AG04450 (cell line): ENCODE measurements at regions of chr3 and their contacts with region 1.

Region 1: DNA sequence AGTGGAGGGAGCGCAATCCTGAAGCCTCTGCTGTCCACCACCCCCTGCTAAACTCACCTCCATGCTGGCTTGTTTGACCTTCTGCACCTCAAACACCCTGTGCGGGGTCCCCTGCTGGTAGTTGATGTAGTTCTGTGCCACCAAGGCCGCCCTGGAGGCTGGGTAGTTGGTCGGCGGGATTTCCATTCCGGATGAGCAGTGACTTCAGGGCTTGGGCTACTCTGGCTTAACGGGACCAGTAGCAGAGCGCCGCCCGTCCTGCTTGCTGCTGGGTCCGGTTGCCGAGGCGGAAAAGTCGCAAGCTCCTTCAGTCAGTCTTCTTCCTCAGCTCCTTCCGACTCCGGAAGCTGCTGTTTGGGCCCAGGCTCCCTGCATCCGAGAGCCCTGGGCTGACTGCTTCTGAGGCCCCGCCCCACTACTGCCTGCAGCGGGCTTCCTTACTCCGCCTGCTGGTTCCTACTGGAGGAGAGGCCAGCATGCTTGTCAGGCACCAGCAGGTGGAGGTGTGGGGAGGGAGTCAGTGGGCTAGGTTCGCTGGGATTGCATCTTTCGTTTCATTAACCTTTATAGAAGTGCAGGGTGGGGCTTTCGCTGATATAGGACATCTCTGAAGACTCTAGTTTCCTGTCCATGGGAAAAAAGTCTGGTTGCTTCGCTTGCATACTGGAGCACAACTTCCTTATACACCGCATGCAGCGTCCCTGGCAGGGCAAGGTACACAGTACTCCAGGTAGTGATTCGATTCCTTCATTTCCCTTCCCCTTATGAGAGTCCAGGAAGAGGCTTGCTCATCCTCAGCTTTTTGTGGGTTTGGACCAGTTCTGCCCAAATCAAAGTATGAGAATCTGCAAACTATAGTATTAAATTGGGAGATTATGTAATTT is at the start of gene LXN:
- DNase-seq: peak; percentile 60
- H3K4me3 ChIP-seq: peak within 1 kb of the TSS; percentile 90
- H3K27ac ChIP-seq: peak within 1 kb of the TSS; percentile 55
- H3K27me3 ChIP-seq: no peaks in the 10 kb centered on the region
- CTCF ChIP-seq: peak; percentile 90
- polyA plus RNA-seq, gene LXN: 281 and 347 TPM in 2 replicates

Region 2: GRCh38 chr3:158748237-158748828 is 75.8 kb after region 1 on chr3:
- CTCF ChIA-PET with region 1: no interaction called
- POLR2A ChIA-PET with region 1: no interaction called
- DNase-seq: no peak
- H3K4me3 ChIP-seq: no peak overlapping the region
- H3K27ac ChIP-seq: no peak overlapping the region
- H3K27me3 ChIP-seq: no peaks in the 10 kb centered on the region
- CTCF ChIP-seq: no peak

Region 3: DNA sequence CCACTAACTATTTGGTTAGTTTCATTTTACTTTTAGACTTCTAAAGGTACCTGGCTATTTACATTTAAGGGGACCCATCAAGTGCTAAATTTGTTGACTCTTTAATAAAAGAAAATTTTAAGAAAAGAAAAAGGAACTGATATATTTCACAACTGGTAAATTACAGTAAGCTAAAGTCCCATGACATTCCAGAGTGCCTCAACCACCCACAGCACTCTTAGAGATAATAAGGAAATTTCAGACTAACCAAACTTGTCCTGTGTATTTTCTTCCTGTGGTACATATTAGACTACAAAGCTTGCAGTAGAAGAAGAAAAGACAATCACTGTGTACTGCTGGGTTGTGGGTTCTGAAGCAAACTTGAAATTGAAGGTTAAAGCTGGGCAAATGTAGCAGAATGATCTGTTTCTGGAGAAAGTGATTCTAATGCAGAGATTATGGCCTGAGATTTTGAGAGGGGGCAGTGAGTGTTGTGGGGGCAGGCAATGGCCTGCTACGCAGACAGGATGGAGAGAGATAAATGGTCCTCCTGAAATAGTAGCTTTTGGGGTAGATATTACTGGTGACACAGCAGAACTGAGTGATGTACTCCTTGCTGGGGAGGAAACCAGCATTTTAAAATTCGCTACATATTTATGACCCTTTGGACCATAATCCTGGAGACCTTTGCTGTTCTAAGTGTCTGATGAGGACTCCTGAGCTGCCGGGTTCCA is 104.8 kb after region 1 on chr3:
- CTCF ChIA-PET with region 1: interaction called, 11 read pairs
- POLR2A ChIA-PET with region 1: no interaction called
- DNase-seq: no peak
- H3K4me3 ChIP-seq: no peak overlapping the region
- H3K27ac ChIP-seq: no peak overlapping the region
- H3K27me3 ChIP-seq: no peaks in the 10 kb centered on the region
- CTCF ChIP-seq: no peak

Region 4: GRCh38 chr3:158912188-158912587 is 239.7 kb after region 1 on chr3:
- CTCF ChIA-PET with region 1: no interaction called
- POLR2A ChIA-PET with region 1: no interaction called
- DNase-seq: no peak
- H3K4me3 ChIP-seq: no peak overlapping the region
- H3K27ac ChIP-seq: no peak overlapping the region
- H3K27me3 ChIP-seq: no peaks in the 10 kb centered on the region
- CTCF ChIP-seq: no peak